ENCODE measurements at regions of chr5 and their contacts with region 1.

Region 1: GRCh38 chr5:131382407-131383395 is 118.8 kb downstream of the CDC42SE2 start:
- DNase-seq: peak; percentile 29 to 93 (median 50)
- ATAC-seq: peak; percentile 65
- H3K4me3 ChIP-seq: peak overlapping the region in 1 of 2 experiments; percentile 13
- H3K4me3 Mint-ChIP-seq: peak overlapping the region; percentile 53
- H3K27ac ChIP-seq: peak overlapping the region; percentile 11 to 99
- H3K27ac Mint-ChIP-seq: peak overlapping the region; percentile 97
- H3K4me1 ChIP-seq: peaks cover 88% of the 10 kb centered on the region
- H3K4me1 Mint-ChIP-seq: peaks cover 93% of the 10 kb centered on the region
- H3K27me3 ChIP-seq: no peaks in the 10 kb centered on the region
- H3K27me3 Mint-ChIP-seq: no peaks in the 10 kb centered on the region
- CTCF ChIP-seq: peak; percentile 66

Region 2: DNA sequence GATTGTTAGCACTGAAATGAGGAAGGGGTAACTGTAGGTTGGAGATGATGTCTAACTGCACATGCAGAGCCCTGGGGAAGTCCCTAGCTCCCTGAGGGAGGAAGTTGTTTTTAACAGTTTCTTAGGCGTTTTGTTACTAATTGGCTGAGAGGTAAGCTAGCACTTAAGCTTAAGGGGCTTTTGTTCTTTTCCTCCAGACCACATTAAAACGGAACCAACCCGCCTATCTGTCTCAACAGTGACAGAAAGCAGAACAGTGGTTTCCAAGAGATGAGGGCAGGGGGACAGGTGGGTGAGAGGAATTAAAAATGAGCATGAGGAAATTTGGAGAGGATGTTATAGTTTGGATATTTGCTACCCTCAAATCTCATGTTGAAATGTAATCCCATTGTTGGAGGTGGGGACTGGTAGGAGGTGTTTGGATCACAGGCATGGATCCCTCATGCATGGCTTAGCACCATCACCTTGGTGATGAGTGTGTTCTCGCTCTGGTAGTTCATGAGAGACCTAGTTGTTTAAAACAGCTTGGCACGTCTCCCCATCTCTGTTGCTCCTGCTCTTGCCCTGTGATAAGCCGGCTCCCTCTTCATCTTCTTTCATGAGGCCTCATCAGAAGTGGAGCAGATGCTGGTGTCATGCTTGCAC is 173.1 kb before region 1 on chr5:
- CTCF ChIA-PET with region 1: interaction called, 3 read pairs
- POLR2A ChIA-PET with region 1: interaction called, 5 read pairs
- intact Hi-C with region 1: loop called (anchors 1 to 5 kb)
- DNase-seq: peak; percentile 14 to 93 (median 55)
- ATAC-seq: peak; percentile 94
- H3K4me3 ChIP-seq: peak overlapping the region; percentile 2 to 13
- H3K4me3 Mint-ChIP-seq: peak overlapping the region; percentile 72
- H3K27ac ChIP-seq: peak overlapping the region; percentile 51 to 83
- H3K27ac Mint-ChIP-seq: peak overlapping the region; percentile 97
- H3K4me1 ChIP-seq: peaks cover 61% of the 10 kb centered on the region
- H3K4me1 Mint-ChIP-seq: peaks cover 60% of the 10 kb centered on the region
- H3K27me3 ChIP-seq: no peaks in the 10 kb centered on the region
- H3K27me3 Mint-ChIP-seq: no peaks in the 10 kb centered on the region
- CTCF ChIP-seq: no peak

Region 3: GRCh38 chr5:131258733-131259132 is 124.0 kb before region 1 on chr5:
- CTCF ChIA-PET with region 1: interaction called, 87 read pairs
- POLR2A ChIA-PET with region 1: interaction called, 95 read pairs
- intact Hi-C with region 1: loop called in 1 of 2 experiments (anchors 5 kb)
- DNase-seq: no peak
- ATAC-seq: no peak
- H3K4me3 ChIP-seq: no peak overlapping the region
- H3K4me3 Mint-ChIP-seq: peak overlapping the region; percentile 79
- H3K27ac ChIP-seq: peak overlapping the region in 1 of 2 experiments; percentile 89
- H3K27ac Mint-ChIP-seq: peak overlapping the region; percentile 96
- H3K4me1 ChIP-seq: peaks cover 69% of the 10 kb centered on the region
- H3K4me1 Mint-ChIP-seq: peaks cover 79% of the 10 kb centered on the region
- H3K27me3 ChIP-seq: no peaks in the 10 kb centered on the region
- H3K27me3 Mint-ChIP-seq: no peaks in the 10 kb centered on the region
- CTCF ChIP-seq: no peak

Region 4: GRCh38 chr5:131281133-131281867 is 101.4 kb before region 1 on chr5:
- CTCF ChIA-PET with region 1: interaction called, 10 read pairs
- POLR2A ChIA-PET with region 1: interaction called, 19 read pairs
- intact Hi-C with region 1: loop called (anchors 2 to 5 kb)
- DNase-seq: peak in 2 of 9 experiments; percentile 83 to 91
- ATAC-seq: peak; percentile 81
- H3K4me3 ChIP-seq: peak overlapping the region; percentile 32 to 47
- H3K4me3 Mint-ChIP-seq: peak overlapping the region; percentile 81
- H3K27ac ChIP-seq: peak overlapping the region; percentile 75 to 86
- H3K27ac Mint-ChIP-seq: peak overlapping the region; percentile 94
- H3K4me1 ChIP-seq: peaks cover 87% of the 10 kb centered on the region
- H3K4me1 Mint-ChIP-seq: peaks cover 78% of the 10 kb centered on the region
- H3K27me3 ChIP-seq: no peaks in the 10 kb centered on the region
- H3K27me3 Mint-ChIP-seq: no peaks in the 10 kb centered on the region
- CTCF ChIP-seq: no peak

Region 5: GRCh38 chr5:131338051-131338453 is 44.6 kb before region 1 on chr5:
- CTCF ChIA-PET with region 1: interaction called, 3 read pairs
- POLR2A ChIA-PET with region 1: interaction called, 3 read pairs
- intact Hi-C with region 1: loop called in 1 of 2 experiments (anchors 5 kb)
- DNase-seq: no peak
- ATAC-seq: peak; percentile 15
- H3K4me3 ChIP-seq: no peak overlapping the region
- H3K4me3 Mint-ChIP-seq: no peak overlapping the region
- H3K27ac ChIP-seq: peak overlapping the region in 1 of 2 experiments; percentile 82
- H3K27ac Mint-ChIP-seq: peak overlapping the region; percentile 72
- H3K4me1 ChIP-seq: peaks cover 44% of the 10 kb centered on the region
- H3K4me1 Mint-ChIP-seq: peaks cover 82% of the 10 kb centered on the region
- H3K27me3 ChIP-seq: no peaks in the 10 kb centered on the region
- H3K27me3 Mint-ChIP-seq: no peaks in the 10 kb centered on the region
- CTCF ChIP-seq: no peak

Region 6: DNA sequence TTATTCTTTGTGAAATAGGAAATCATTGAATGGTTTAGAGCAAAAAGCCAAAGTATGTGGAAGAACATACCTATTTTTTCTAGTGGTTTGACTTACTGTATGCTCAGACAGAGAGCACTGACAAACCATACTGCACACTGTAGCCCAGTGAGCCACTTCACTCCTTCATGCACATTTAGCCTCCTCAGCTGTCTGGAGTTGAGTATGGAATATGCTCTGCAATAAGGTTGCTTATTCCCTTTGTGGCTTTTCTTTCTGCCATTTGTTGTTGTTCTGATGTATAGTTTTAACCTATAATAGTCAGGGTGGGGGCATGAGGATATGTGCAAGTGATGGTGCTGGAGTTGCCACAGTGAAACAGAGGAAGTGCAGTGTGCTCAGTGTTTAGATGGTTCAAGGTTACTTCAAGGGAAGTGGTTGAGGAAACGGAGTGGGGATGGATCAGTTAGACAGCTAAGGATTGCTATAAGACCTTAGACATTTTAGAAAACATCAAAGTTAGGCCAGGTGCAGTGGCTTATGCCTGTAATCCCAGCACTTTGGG is 18.1 kb before region 1 on chr5:
- CTCF ChIA-PET with region 1: interaction called, 8 read pairs
- POLR2A ChIA-PET with region 1: interaction called, 10 read pairs
- intact Hi-C with region 1: loop called (anchors 1 to 2 kb)
- DNase-seq: peak in 1 of 9 experiments; percentile 54
- ATAC-seq: peak; percentile 51
- H3K4me3 ChIP-seq: no peak overlapping the region
- H3K4me3 Mint-ChIP-seq: peak overlapping the region; percentile 42
- H3K27ac ChIP-seq: peak overlapping the region; percentile 11 to 62
- H3K27ac Mint-ChIP-seq: peak overlapping the region; percentile 92
- H3K4me1 ChIP-seq: peaks cover 66% of the 10 kb centered on the region
- H3K4me1 Mint-ChIP-seq: peaks cover 78% of the 10 kb centered on the region
- H3K27me3 ChIP-seq: no peaks in the 10 kb centered on the region
- H3K27me3 Mint-ChIP-seq: no peaks in the 10 kb centered on the region
- CTCF ChIP-seq: no peak

Region 7: DNA sequence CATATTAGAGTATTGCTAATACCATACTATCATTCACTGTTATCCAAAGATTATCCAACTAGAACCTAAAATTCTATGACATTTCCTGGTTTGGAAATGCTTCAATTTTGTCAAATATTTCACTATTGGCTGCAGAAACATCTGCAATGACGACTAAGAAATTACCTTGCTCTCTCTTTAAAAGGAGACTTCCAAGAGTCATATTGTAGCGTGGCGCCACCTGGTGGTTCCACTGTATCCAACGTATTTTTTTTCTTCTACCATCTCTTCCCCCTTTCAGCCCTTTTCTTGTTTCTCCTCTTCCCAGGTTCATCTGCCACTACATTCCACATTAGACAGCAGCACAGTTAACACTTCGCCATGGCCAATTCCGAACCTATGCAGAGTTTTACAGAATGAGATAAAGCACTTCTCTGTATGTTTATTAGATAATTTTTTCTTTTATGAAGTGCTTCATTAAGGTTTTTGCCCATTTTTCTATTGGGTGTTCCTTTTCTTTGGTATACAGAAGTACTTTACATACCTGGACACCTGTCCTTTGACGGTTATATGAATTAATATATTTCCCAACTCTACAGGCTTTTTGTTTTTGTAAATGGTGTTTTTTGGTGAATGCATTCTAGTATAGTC is 34.7 kb after region 1 on chr5:
- CTCF ChIA-PET with region 1: interaction called, 4 read pairs
- POLR2A ChIA-PET with region 1: interaction called, 5 read pairs
- intact Hi-C with region 1: loop called in 1 of 2 experiments (anchors 1 kb)
- DNase-seq: peak; percentile 66 to 91 (median 85)
- ATAC-seq: peak; percentile 74
- H3K4me3 ChIP-seq: no peak overlapping the region
- H3K4me3 Mint-ChIP-seq: peak overlapping the region; percentile 64
- H3K27ac ChIP-seq: peak overlapping the region in 1 of 2 experiments; percentile 32
- H3K27ac Mint-ChIP-seq: peak overlapping the region; percentile 91
- H3K4me1 ChIP-seq: peaks cover 26% of the 10 kb centered on the region
- H3K4me1 Mint-ChIP-seq: peaks cover 45% of the 10 kb centered on the region
- H3K27me3 ChIP-seq: no peaks in the 10 kb centered on the region
- H3K27me3 Mint-ChIP-seq: no peaks in the 10 kb centered on the region
- CTCF ChIP-seq: peak; percentile 95